ENCODE measurements at regions of chr17 and their contacts with region 1.

Region 1: DNA sequence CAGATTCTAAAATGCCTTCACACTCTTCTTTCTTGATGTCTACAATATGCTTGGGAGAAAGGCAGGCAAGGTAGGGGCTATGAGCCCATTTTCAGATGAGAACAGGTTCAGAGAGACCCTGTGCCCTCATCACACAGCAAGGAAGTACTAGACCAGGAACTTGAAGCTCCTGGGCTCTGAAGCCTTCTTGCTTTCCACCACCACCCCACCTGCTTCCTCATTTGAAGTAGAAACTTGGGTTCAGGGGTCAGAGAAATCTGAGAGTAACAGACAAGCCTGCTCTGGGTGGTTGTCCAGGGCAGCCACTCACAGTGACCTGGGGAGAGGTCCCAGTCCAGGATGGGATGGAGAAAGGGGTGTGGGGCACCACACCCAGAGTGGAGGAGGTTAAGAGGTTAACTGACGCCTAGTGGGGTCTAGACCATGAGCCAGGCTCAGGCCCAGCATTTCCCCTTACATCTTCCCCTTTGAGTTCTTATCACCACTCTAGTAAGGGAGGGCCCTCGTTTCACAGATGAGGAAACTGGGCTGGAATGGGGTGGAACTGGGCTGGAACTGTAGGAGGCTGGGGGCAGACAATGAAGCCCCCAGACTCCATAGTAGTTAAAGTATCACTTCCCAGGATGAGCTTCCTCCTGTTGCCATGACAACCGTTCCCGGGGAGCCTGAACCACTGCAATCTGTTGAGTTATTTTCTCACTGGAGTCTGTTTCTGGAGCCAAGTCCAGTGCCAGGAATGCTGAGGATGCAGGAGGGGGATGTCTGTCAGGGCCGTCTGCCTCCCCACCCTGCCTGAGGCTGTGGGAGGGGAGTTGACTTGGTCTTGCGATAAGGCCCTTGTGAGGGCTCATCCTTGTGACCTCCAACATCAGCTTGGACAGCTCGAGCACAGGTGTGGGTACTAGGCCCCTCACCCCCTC is 16.2 kb upstream of the PHF12 start:
- DNase-seq: no peak
- ATAC-seq: peak in 2 of 3 donors; percentile 21 to 30
- H3K4me3 ChIP-seq: no peak overlapping the region
- H3K4me3 Mint-ChIP-seq: no peak overlapping the region
- H3K27ac ChIP-seq: no peak overlapping the region
- H3K27ac Mint-ChIP-seq: peak overlapping the region in 1 of 2 donors; percentile 56
- H3K4me1 ChIP-seq: peaks cover 13% of the 10 kb centered on the region
- H3K4me1 Mint-ChIP-seq: peaks cover 0 to 5% of the 10 kb centered on the region in 2 donors
- H3K27me3 ChIP-seq: no peaks in the 10 kb centered on the region
- H3K27me3 Mint-ChIP-seq: peaks cover 12 to 14% of the 10 kb centered on the region in 2 donors
- CTCF ChIP-seq: no peak

Region 2: GRCh38 chr17:28951991-28952975 is 15.2 kb before region 1 on chr17:
- intact Hi-C with region 1: no loop called
- DNase-seq: peak; percentile 87 to 99
- ATAC-seq: peak; percentile 62 to 87 (median 71)
- H3K4me3 ChIP-seq: peak overlapping the region; percentile 65
- H3K4me3 Mint-ChIP-seq: no peak overlapping the region
- H3K27ac ChIP-seq: peak overlapping the region; percentile 97
- H3K27ac Mint-ChIP-seq: no peak overlapping the region
- H3K4me1 ChIP-seq: peaks cover 24% of the 10 kb centered on the region
- H3K4me1 Mint-ChIP-seq: peaks cover 16 to 21% of the 10 kb centered on the region in 2 donors
- H3K27me3 ChIP-seq: no peaks in the 10 kb centered on the region
- H3K27me3 Mint-ChIP-seq: no peaks in the 10 kb centered on the region
- CTCF ChIP-seq: no peak

Region 3: DNA sequence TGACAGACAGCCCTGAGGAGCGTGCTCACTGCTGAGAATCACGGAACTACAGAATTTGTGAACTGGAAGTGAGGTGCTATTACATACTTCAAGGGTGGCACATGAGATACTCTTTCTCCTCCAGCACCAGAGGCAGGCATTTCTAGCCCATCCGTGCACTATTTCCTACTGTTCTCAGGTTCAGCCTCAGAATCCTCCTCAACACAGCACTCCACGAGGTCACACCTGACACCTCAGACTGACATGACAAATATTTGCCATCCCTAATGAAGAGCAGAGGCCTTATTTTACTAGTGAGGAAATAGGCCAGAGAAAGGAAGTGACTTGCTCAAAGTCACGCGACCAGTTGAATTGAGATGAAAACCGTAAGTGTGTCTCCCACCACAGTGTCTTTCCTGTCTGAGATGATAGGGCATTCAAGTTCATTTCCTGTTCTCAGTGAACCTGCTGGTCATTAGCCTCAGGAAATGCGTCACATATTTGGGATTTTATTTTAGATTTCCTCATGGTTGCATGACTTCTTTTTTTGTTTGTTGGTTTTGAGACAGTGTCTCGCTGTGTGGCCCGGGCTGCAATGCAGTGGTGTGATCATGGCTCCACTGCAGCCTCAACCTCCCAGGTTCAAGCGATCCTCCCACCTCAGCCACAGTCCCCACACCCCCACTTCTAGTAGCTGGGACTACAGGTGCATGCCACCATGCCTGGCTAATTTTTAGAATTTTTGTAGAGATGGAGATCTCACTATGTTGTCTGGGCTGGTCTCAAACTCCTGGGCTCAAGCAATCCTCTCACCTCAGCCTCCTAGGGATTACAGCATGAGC is 14.9 kb after region 1 on chr17:
- intact Hi-C with region 1: no loop called
- DNase-seq: peak; percentile 58 to 92
- ATAC-seq: peak; percentile 82 to 95 (median 91)
- H3K4me3 ChIP-seq: no peak overlapping the region
- H3K4me3 Mint-ChIP-seq: peak overlapping the region; percentile 70
- H3K27ac ChIP-seq: peak overlapping the region; percentile 85
- H3K27ac Mint-ChIP-seq: peak overlapping the region; percentile 97 to 99
- H3K4me1 ChIP-seq: peaks cover 31% of the 10 kb centered on the region
- H3K4me1 Mint-ChIP-seq: peaks cover 18 to 26% of the 10 kb centered on the region in 2 donors
- H3K27me3 ChIP-seq: peaks cover 2% of the 10 kb centered on the region
- H3K27me3 Mint-ChIP-seq: no peaks in the 10 kb centered on the region
- CTCF ChIP-seq: no peak

Region 4: DNA sequence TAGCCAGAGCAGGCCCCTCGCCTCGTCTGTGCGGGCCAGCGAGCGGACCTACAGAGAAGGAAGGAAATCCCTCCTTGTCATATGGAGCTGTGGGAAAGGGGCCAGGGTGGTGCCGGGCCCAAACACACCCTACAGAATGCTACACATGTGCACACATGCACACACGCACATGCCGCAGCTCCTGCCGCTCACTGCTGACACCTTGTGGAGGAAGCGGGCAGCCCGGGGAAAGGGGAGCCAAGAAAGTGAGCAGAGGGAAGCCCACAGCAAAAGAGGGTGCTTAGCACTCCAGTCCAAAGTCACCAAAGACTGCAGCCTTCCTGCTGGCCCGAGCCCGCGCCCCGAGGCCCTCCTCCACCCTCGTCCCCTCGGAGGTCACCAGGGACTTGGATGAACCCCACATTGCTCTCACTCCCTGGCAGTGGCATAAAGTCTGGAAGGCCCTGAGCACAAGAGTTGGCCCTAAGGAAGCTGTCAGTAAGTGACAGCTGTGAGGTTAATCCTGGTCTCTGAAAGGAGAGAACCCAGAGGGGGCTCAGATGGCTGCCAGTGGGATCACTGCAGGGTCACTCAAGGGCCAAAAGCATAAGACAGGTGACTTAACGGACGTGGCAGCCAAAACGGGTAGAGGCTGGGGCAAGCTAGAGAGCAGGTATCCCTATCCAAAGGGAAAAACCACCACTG is 144.5 kb after region 1 on chr17:
- intact Hi-C with region 1: loop called (anchors 1 kb)
- DNase-seq: peak; percentile 51 to 77
- ATAC-seq: peak; percentile 61 to 74 (median 70)
- H3K4me3 ChIP-seq: no peak overlapping the region
- H3K4me3 Mint-ChIP-seq: no peak overlapping the region
- H3K27ac ChIP-seq: no peak overlapping the region
- H3K27ac Mint-ChIP-seq: no peak overlapping the region
- H3K4me1 ChIP-seq: peaks cover 6% of the 10 kb centered on the region
- H3K4me1 Mint-ChIP-seq: peaks cover 7 to 16% of the 10 kb centered on the region in 2 donors
- H3K27me3 ChIP-seq: no peaks in the 10 kb centered on the region
- H3K27me3 Mint-ChIP-seq: no peaks in the 10 kb centered on the region
- CTCF ChIP-seq: peak; percentile 67

Region 5: GRCh38 chr17:29116804-29117772 is 149.6 kb after region 1 on chr17:
- intact Hi-C with region 1: loop called (anchors 1 kb)
- DNase-seq: peak; percentile 76 to 87
- ATAC-seq: peak; percentile 81 to 85 (median 82)
- H3K4me3 ChIP-seq: no peak overlapping the region
- H3K4me3 Mint-ChIP-seq: no peak overlapping the region
- H3K27ac ChIP-seq: no peak overlapping the region
- H3K27ac Mint-ChIP-seq: peak overlapping the region; percentile 41 to 46
- H3K4me1 ChIP-seq: peaks cover 6% of the 10 kb centered on the region
- H3K4me1 Mint-ChIP-seq: peaks cover 9 to 12% of the 10 kb centered on the region in 2 donors
- H3K27me3 ChIP-seq: no peaks in the 10 kb centered on the region
- H3K27me3 Mint-ChIP-seq: no peaks in the 10 kb centered on the region
- CTCF ChIP-seq: peak; percentile 97

Measured in natural killer cell (primary cell).